ENCODE measurements at regions of chr10 and their contacts with region 1.

Region 1: GRCh38 chr10:60208676-60209269 is 180.9 kb downstream of the ANK3 start:
- DNase-seq: peak; percentile 25
- ATAC-seq: no peak
- H3K4me3 ChIP-seq: no peak overlapping the region
- H3K27ac ChIP-seq: no peak overlapping the region
- H3K4me1 ChIP-seq: no peaks in the 10 kb centered on the region
- H3K27me3 ChIP-seq: peaks cover 3% of the 10 kb centered on the region; the same call in 1 of the 2 replicates
- CTCF ChIP-seq: peak; percentile 76; the same call in 1 of the 2 replicates

Region 2: DNA sequence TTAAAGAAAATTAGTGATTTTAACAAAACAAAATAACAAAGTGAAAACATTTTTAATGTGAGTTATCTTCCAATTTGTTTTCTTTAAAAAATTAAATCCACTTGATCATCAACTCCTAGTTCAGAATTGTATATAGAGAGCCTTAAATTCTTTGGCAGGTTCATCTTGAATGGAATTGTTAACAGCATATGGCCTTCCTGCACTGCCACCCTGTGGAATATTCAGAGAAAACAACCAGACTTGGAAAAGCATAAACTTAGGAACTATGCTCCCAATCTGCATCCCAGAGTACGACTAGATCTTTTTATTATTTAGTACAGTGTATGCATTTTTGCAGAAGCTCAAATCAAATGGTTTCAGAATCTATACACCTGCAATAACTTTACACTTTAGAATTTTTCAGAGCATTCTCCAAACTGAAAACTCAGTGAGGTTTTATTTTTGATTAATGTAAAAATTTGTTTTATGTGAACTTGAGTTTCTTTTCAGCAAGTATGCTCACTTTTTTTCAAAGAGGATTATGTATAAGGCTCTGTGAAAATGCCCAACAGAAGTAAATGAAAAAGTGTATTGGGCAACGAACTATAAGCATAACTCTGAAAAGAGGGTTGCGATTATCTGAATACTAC is 225.8 kb after region 1 on chr10:
- CTCF ChIA-PET with region 1: no interaction called
- POLR2A ChIA-PET with region 1: no interaction called
- in situ Hi-C with region 1: no loop called
- intact Hi-C with region 1: loop called (anchors 2 kb)
- DNase-seq: peak; percentile 46
- ATAC-seq: peak; percentile 81; the same call in 1 of the 2 replicates
- H3K4me3 ChIP-seq: no peak overlapping the region
- H3K27ac ChIP-seq: no peak overlapping the region
- H3K4me1 ChIP-seq: no peaks in the 10 kb centered on the region
- H3K27me3 ChIP-seq: no peaks in the 10 kb centered on the region
- CTCF ChIP-seq: peak; percentile 75; the same call in 1 of the 2 replicates

Measured in Panc1 (cell line).